ENCODE measurements at regions of chr4 and their contacts with region 1.

Region 1: GRCh38 chr4:4614925-4615678 is 73.3 kb upstream of the STX18 start:
- DNase-seq: no peak
- H3K4me3 ChIP-seq: no peak overlapping the region
- H3K27ac ChIP-seq: no peak overlapping the region
- H3K4me1 ChIP-seq: no peaks in the 10 kb centered on the region
- H3K27me3 ChIP-seq: no peaks in the 10 kb centered on the region
- CTCF ChIP-seq: no peak
- EP300 ChIP-seq: no peak
- POLR2A ChIP-seq: no peak

Region 2: DNA sequence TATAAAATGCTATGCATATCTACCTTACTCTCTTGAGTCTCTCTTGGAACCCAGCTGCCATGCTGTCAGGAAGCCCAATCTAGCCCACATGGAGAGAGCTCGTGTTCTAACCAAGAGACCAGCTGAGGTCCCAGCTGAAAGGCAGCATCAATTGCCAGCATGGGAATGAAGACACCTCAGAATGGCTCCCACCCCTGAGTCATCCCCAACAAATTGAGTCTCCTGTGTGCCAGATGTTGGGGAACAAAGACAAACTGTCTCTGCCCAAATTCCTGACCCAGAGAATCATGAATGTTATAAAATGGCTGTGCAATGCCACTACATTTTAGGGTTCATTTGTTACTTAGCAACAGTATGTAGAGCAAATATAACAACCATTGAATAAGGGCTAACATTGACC is 31.9 kb after region 1 on chr4:
- in situ Hi-C with region 1: no loop called
- intact Hi-C with region 1: no loop called
- DNase-seq: no peak
- H3K4me3 ChIP-seq: no peak overlapping the region
- H3K27ac ChIP-seq: no peak overlapping the region
- H3K4me1 ChIP-seq: no peaks in the 10 kb centered on the region
- H3K27me3 ChIP-seq: no peaks in the 10 kb centered on the region
- CTCF ChIP-seq: no peak
- EP300 ChIP-seq: no peak
- POLR2A ChIP-seq: no peak

Region 3: GRCh38 chr4:4714331-4714730 is 99.2 kb after region 1 on chr4:
- in situ Hi-C with region 1: no loop called
- intact Hi-C with region 1: no loop called
- DNase-seq: no peak
- H3K4me3 ChIP-seq: no peak overlapping the region
- H3K27ac ChIP-seq: no peak overlapping the region
- H3K4me1 ChIP-seq: no peaks in the 10 kb centered on the region
- H3K27me3 ChIP-seq: no peaks in the 10 kb centered on the region
- CTCF ChIP-seq: no peak
- EP300 ChIP-seq: no peak
- POLR2A ChIP-seq: no peak

Region 4: DNA sequence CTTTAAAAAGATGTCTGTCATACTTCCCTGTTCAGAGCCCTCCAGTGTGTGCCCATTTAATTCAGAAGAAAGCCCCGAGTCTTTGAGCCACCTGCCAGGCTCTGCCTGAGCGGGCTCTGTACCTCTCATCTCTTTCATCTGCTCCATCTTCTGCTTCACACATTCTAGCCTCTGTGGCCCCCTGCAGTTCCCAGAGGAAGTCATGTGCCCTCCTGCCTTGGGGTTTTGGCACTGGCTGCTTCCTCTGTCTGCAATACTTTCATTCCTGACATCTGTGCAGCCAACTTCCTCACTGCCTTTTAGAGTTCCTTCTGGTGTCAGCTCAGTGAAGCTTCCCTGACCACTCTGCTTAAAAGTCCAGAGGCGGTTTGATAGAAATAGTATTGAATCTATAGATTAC is 430.0 kb after region 1 on chr4:
- in situ Hi-C with region 1: no loop called
- intact Hi-C with region 1: loop called (anchors 5 kb)
- DNase-seq: peak; percentile 18
- H3K4me3 ChIP-seq: no peak overlapping the region
- H3K27ac ChIP-seq: no peak overlapping the region
- H3K4me1 ChIP-seq: no peaks in the 10 kb centered on the region
- H3K27me3 ChIP-seq: no peaks in the 10 kb centered on the region
- CTCF ChIP-seq: no peak
- EP300 ChIP-seq: no peak
- POLR2A ChIP-seq: no peak

Region 5: GRCh38 chr4:5497489-5497888 is 882.4 kb after region 1 on chr4:
- in situ Hi-C with region 1: no loop called
- intact Hi-C with region 1: no loop called
- DNase-seq: no peak
- H3K4me3 ChIP-seq: no peak overlapping the region
- H3K27ac ChIP-seq: no peak overlapping the region
- H3K4me1 ChIP-seq: no peaks in the 10 kb centered on the region
- H3K27me3 ChIP-seq: no peaks in the 10 kb centered on the region
- CTCF ChIP-seq: no peak
- EP300 ChIP-seq: no peak
- POLR2A ChIP-seq: no peak